ENCODE measurements at regions of chr1 and their contacts with region 1.

Region 1: GRCh38 chr1:54791880-54792522 is 9.1 kb downstream of the TTC22 start:
- DNase-seq: peak; percentile 74
- H3K4me3 ChIP-seq: no peak overlapping the region
- H3K27ac ChIP-seq: no peak overlapping the region
- H3K4me1 ChIP-seq: no peaks in the 10 kb centered on the region
- H3K27me3 ChIP-seq: peaks cover 2% of the 10 kb centered on the region
- CTCF ChIP-seq: peak; percentile 83

Region 2: DNA sequence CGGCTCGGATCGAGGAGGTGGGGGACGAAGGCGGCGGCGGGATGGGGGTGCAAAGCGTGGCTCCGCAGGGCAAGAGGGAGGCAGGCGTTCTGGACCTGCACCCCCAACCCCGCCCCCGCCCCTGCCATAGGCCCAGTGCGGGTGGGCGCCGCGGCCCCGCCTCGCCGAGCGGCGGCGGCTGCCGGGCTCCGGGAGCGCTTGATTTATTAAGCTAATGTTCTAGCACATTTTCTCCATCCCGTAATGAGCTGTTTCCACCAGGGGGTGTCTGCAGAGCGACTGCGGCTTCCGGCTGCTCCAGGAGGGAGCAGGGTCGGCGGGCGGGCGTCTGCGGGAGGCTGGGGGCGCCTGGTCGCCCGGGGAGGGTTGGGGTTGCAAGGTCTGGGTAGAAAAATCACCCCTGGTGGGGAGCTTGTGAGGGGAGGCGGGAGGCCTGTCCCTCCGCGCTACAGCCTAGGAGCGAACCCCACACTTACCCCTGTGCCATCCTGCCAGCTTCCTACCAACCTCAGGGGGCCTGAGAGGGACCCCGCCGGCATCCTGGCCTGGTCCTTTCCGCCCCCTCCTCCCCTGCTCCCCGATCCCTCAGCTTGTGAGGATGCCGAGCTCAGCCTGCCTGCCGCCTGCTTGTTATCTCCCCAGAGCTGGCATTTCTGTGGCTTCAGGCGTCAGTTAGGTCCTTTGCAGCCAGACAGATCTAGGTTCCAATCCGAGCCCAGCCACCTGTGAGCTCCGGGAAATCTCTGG is 292.5 kb before region 1 on chr1:
- CTCF ChIA-PET with region 1: no interaction called
- POLR2A ChIA-PET with region 1: no interaction called
- intact Hi-C with region 1: loop called (anchors 10 kb)
- DNase-seq: peak; percentile 90
- H3K4me3 ChIP-seq: peak overlapping the region; percentile 46
- H3K27ac ChIP-seq: peak overlapping the region; percentile 32
- H3K4me1 ChIP-seq: peaks cover 17% of the 10 kb centered on the region
- H3K27me3 ChIP-seq: no peaks in the 10 kb centered on the region
- CTCF ChIP-seq: peak; percentile 59

Region 3: GRCh38 chr1:54671985-54672608 is 119.9 kb before region 1 on chr1:
- CTCF ChIA-PET with region 1: no interaction called
- POLR2A ChIA-PET with region 1: no interaction called
- intact Hi-C with region 1: loop called (anchors 2 kb)
- DNase-seq: peak; percentile 65
- H3K4me3 ChIP-seq: no peak overlapping the region
- H3K27ac ChIP-seq: no peak overlapping the region
- H3K4me1 ChIP-seq: no peaks in the 10 kb centered on the region
- H3K27me3 ChIP-seq: no peaks in the 10 kb centered on the region
- CTCF ChIP-seq: peak; percentile 80

Measured in A673 (cell line).